GM10248 (cell line): ENCODE measurements at regions of chrX and their contacts with region 1.

Region 1: GRCh38 chrX:78029663-78030062 is 60.2 kb upstream of the PGAM4 start:
- DNase-seq: peak; percentile 14
- CTCF ChIP-seq: peak; percentile 53

Region 2: GRCh38 chrX:76555814-76556213 is 1473.8 kb before region 1 on chrX:
- CTCF ChIA-PET with region 1: interaction called, 10 read pairs
- POLR2A ChIA-PET with region 1: no interaction called
- DNase-seq: no peak
- CTCF ChIP-seq: no peak

Region 3: DNA sequence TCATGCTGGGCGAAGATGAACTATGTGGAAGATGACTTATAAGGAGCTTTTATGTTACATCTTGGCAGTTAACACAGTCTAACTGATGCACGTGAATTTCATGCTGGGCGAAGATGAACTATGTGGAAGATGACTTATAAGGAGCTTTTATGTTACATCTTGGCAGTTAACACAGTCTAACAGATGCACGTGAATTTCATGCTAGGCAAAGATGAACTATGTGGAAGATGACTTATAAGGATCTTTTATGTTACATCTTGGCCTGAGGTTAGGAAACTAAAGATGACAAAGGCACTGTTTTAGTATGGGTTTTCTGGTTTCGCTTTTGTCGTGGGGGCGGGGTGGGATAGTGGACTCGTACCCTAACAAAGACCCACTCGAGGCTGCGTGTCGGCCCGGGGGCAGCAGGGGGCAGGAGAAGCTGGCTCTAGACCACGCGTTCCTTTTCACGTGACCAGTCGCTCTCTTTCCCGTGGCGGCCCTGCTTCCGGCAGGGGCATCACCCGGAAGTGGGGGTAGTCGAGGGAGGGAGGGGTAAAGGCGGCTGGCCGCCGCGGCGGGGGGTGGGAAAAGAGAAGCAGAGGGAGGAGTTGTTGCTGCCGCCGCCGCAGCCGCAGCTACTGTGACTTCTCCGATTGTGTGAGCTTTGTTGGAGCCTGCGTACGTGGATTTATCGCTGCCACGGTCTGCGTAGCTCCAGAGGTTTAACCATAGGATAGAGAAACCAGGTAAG is 119.4 kb before region 1 on chrX and contains the start of gene ATP7A:
- CTCF ChIA-PET with region 1: interaction called, 16 read pairs
- POLR2A ChIA-PET with region 1: no interaction called
- DNase-seq: peak; percentile 85
- CTCF ChIP-seq: peak; percentile 56

Region 4: GRCh38 chrX:78104447-78105185 is 75.0 kb after region 1 on chrX:
- CTCF ChIA-PET with region 1: no interaction called
- POLR2A ChIA-PET with region 1: no interaction called
- DNase-seq: peak; percentile 18
- CTCF ChIP-seq: no peak